Dorsolateral prefrontal cortex (tissue), 120 donors: ENCODE measurements at regions of chr1 and their contacts with region 1.

Region 1: GRCh38 chr1:216929870-216930582 is 206.8 kb upstream of the ESRRG start:
- DNase-seq: no peak
- H3K4me3 ChIP-seq: no peak overlapping the region
- H3K27ac ChIP-seq: no peak overlapping the region
- H3K27me3 ChIP-seq: no peaks in the 10 kb centered on the region
- CTCF ChIP-seq: no peak

Region 2: GRCh38 chr1:216778737-216779136 is 151.3 kb before region 1 on chr1:
- intact Hi-C with region 1: loop called in 1 of 2 experiments (anchors 10 kb)
- DNase-seq: no peak
- H3K4me3 ChIP-seq: no peak overlapping the region
- H3K27ac ChIP-seq: no peak overlapping the region
- H3K27me3 ChIP-seq: no peaks in the 10 kb centered on the region
- CTCF ChIP-seq: no peak

Region 3: DNA sequence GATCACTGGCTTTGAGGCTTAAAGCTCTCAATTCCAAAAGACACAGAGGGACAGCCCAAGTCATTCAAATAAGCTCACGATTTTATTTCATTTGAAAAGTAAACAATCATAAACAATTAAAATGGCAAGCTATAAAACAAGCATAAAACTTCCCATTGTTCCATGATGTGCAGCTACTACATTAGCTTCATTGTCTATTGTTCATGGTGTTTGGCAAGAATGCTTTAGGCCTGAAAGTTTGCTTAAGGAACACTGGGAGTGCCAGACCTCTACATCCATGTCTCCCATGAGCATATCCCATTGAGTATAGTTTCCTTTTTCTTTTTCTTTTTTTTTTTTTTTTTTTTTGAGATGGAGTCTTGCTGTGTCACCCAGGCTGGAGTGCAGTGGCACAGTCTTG is 79.3 kb after region 1 on chr1:
- intact Hi-C with region 1: no loop called
- DNase-seq: no peak
- H3K4me3 ChIP-seq: peak overlapping the region in 2 of 59 donors; percentile 9 to 18
- H3K27ac ChIP-seq: peak overlapping the region in 50 of 59 donors; percentile 8 to 83 (median 62)
- H3K27me3 ChIP-seq: no peaks in the 10 kb centered on the region
- CTCF ChIP-seq: peak in 1 of 56 donors; percentile 19